ENCODE measurements at regions of chr11 and their contacts with region 1.

Region 1: DNA sequence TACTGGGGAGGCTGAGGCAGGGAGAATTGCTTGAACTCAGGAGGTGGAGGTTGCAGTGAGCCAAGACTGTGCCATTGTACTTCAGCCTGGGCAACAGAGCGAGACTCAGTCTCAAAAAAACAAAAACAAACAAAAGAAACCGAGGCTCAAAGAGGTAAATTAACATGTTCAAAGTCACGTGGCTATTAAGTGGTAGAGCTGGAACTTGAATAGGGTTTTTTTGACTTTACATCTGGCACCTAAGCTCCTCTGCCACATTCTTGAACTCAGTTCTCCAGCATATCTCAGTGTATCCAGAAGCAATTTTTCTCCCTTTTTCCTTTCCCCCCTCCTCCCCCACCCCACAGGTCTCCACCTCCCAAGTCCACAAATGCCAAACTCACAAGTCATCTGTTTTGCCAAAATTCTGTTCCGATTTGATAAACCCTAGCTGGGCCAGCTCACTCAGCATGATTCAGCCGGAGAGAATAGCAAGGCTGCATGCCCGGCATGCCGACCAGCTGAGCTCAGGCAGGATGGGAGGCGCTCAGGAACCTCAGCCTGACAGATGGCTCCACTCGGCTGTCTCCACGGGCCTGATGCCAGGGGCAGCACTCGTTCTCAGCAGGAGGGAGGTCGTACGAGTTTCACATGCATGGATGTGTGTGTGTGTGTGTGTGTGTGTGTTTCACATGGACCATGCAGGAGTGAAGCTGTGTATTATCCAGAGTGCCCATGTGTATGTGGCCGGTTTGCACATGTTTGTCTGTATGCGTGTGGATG is 63.2 kb upstream of the RRAS2 start:
- DNase-seq: peak; percentile 91
- H3K4me3 Mint-ChIP-seq: no peak overlapping the region
- H3K27ac Mint-ChIP-seq: no peak overlapping the region
- H3K4me1 Mint-ChIP-seq: peaks cover 17% of the 10 kb centered on the region
- H3K27me3 Mint-ChIP-seq: no peaks in the 10 kb centered on the region
- CTCF ChIP-seq: no peak

Region 2: GRCh38 chr11:14288189-14288935 is 133.9 kb before region 1 on chr11:
- CTCF ChIA-PET with region 1: interaction called, 10 read pairs
- POLR2A ChIA-PET with region 1: interaction called, 4 read pairs
- intact Hi-C with region 1: no loop called
- DNase-seq: peak; percentile 39
- H3K4me3 Mint-ChIP-seq: peak overlapping the region; percentile 56
- H3K27ac Mint-ChIP-seq: peak overlapping the region; percentile 95
- H3K4me1 Mint-ChIP-seq: peaks cover 16% of the 10 kb centered on the region
- H3K27me3 Mint-ChIP-seq: no peaks in the 10 kb centered on the region
- CTCF ChIP-seq: no peak

Region 3: GRCh38 chr11:14300661-14301304 is 121.5 kb before region 1 on chr11:
- CTCF ChIA-PET with region 1: interaction called, 316 read pairs
- POLR2A ChIA-PET with region 1: interaction called, 8 read pairs
- intact Hi-C with region 1: loop called (anchors 1 kb)
- DNase-seq: peak; percentile 75
- H3K4me3 Mint-ChIP-seq: no peak overlapping the region
- H3K27ac Mint-ChIP-seq: no peak overlapping the region
- H3K4me1 Mint-ChIP-seq: peaks cover 6% of the 10 kb centered on the region
- H3K27me3 Mint-ChIP-seq: no peaks in the 10 kb centered on the region
- CTCF ChIP-seq: peak; percentile 82

Region 4: DNA sequence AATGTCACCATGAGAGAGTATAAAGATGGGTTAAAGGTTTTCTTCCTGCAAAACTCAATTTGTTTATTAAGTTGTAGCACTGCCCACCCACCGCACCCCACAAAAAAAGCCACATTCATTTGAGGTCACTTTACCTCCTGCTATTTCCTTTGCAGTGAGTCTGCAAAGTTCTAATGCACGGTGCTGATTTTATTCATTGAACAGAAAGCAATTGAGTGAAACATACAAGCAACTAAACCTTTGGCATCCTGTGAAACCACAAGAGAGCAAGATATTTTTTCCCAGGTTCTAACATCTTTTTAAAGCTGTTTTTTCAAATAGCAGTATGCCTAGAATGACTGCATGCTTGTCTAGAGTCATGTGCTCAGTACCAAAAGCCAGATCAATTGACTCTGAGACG is 102.2 kb before region 1 on chr11:
- CTCF ChIA-PET with region 1: interaction called, 15 read pairs
- POLR2A ChIA-PET with region 1: interaction called, 5 read pairs
- intact Hi-C with region 1: no loop called
- DNase-seq: no peak
- H3K4me3 Mint-ChIP-seq: no peak overlapping the region
- H3K27ac Mint-ChIP-seq: no peak overlapping the region
- H3K4me1 Mint-ChIP-seq: peaks cover 36% of the 10 kb centered on the region
- H3K27me3 Mint-ChIP-seq: no peaks in the 10 kb centered on the region
- CTCF ChIP-seq: no peak

Region 5: GRCh38 chr11:14380947-14381561 is 41.2 kb before region 1 on chr11:
- CTCF ChIA-PET with region 1: interaction called, 46 read pairs
- POLR2A ChIA-PET with region 1: interaction called, 13 read pairs
- intact Hi-C with region 1: no loop called
- DNase-seq: peak; percentile 73
- H3K4me3 Mint-ChIP-seq: peak overlapping the region; percentile 76
- H3K27ac Mint-ChIP-seq: peak overlapping the region; percentile 75
- H3K4me1 Mint-ChIP-seq: peaks cover 15% of the 10 kb centered on the region
- H3K27me3 Mint-ChIP-seq: no peaks in the 10 kb centered on the region
- CTCF ChIP-seq: no peak

Region 6: GRCh38 chr11:14435717-14436512 is 13.7 kb after region 1 on chr11:
- CTCF ChIA-PET with region 1: interaction called, 11 read pairs
- POLR2A ChIA-PET with region 1: interaction called, 7 read pairs
- intact Hi-C with region 1: no loop called
- DNase-seq: no peak
- H3K4me3 Mint-ChIP-seq: no peak overlapping the region
- H3K27ac Mint-ChIP-seq: no peak overlapping the region
- H3K4me1 Mint-ChIP-seq: no peaks in the 10 kb centered on the region
- H3K27me3 Mint-ChIP-seq: no peaks in the 10 kb centered on the region
- CTCF ChIP-seq: no peak

Measured in MCF 10A (cell line).